Colonic mucosa (tissue), 4 donors: ENCODE measurements at regions of chr5 and their contacts with region 1.

Region 1: GRCh38 chr5:88875341-88876234 is 7.4 kb downstream of the MEF2C start:
- DNase-seq: no peak
- H3K4me3 ChIP-seq: no peak overlapping the region
- H3K27ac ChIP-seq: no peak overlapping the region
- H3K4me1 ChIP-seq: no peaks in the 10 kb centered on the region
- H3K27me3 ChIP-seq: no peaks in the 10 kb centered on the region
- CTCF ChIP-seq: no peak

Region 2: DNA sequence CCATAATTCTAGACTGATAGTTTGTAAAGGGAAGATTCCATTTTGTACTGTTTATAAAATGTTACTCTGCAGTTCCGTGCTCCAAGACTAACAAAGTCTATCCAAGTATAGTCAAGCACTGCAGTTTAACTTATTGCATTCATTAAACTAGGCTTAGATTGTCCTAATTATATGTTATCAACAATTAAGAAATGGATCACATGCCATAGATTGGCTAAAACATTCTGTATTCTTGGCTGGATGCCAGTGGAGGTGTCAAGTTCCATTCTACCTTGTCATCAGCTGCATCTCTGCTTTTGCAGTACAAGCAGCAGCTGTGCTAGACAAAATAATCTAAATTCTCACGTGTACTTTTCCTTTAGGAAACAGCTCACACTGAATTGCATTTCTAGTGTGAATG is 76.8 kb after region 1 on chr5:
- intact Hi-C with region 1: no loop called
- DNase-seq: no peak
- H3K4me3 ChIP-seq: no peak overlapping the region
- H3K27ac ChIP-seq: no peak overlapping the region
- H3K4me1 ChIP-seq: no peaks in the 10 kb centered on the region
- H3K27me3 ChIP-seq: no peaks in the 10 kb centered on the region
- CTCF ChIP-seq: no peak

Region 3: DNA sequence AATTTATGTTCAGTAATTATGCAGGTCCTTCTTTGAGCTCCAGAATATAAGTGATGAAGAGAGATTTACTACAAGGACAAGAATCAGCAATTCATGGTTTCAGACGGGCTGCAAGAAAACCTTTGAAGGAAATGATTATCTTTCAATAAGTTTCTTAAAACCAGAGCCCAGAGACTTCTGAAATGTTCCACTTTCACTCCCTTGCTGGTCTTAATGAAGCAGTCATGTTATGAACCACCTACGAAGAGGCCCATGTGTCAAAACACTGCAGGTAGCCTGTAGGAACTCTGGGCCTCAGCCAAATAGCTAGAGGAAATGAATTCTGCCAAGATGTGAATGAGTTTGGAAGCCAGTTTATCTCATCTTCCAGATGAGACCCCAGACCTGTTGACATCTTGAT is 513.3 kb after region 1 on chr5:
- intact Hi-C with region 1: no loop called
- DNase-seq: no peak
- H3K4me3 ChIP-seq: no peak overlapping the region
- H3K27ac ChIP-seq: no peak overlapping the region
- H3K4me1 ChIP-seq: no peaks in the 10 kb centered on the region
- H3K27me3 ChIP-seq: no peaks in the 10 kb centered on the region
- CTCF ChIP-seq: no peak

Region 4: DNA sequence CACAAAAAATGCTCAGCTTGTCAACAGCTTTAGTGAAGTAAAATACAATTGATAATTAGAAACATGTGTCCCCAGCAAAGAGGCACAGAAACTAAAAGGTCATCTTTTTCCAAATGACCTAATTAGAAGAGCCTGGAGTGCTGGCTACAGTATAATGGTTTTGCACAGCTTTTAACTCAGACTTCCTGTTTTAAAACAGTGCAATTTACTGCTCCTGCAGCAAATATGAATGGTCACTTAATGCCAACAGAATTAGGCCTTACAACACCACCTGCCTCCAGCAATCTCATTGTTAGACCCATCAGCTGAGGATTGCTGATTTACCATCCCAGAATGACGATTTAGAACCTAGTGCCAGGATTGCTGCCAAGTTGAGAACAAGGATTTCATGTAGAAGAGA is 1294.7 kb after region 1 on chr5:
- intact Hi-C with region 1: loop called (anchors 10 kb)
- DNase-seq: no peak
- H3K4me3 ChIP-seq: no peak overlapping the region
- H3K27ac ChIP-seq: no peak overlapping the region
- H3K4me1 ChIP-seq: no peaks in the 10 kb centered on the region
- H3K27me3 ChIP-seq: no peaks in the 10 kb centered on the region
- CTCF ChIP-seq: no peak